ENCODE measurements at regions of chr5 and their contacts with region 1.

Region 1: GRCh38 chr5:174418928-174419796 is 305.2 kb upstream of the MSX2 start:
- DNase-seq: peak; percentile 86
- H3K27ac ChIP-seq: no peak overlapping the region
- CTCF ChIP-seq: peak; percentile 97

Region 2: GRCh38 chr5:173890195-173890991 is 528.8 kb before region 1 on chr5:
- CTCF ChIA-PET with region 1: no interaction called
- POLR2A ChIA-PET with region 1: no interaction called
- DNase-seq: no peak
- H3K27ac ChIP-seq: peak overlapping the region; percentile 20
- CTCF ChIP-seq: no peak

Region 3: DNA sequence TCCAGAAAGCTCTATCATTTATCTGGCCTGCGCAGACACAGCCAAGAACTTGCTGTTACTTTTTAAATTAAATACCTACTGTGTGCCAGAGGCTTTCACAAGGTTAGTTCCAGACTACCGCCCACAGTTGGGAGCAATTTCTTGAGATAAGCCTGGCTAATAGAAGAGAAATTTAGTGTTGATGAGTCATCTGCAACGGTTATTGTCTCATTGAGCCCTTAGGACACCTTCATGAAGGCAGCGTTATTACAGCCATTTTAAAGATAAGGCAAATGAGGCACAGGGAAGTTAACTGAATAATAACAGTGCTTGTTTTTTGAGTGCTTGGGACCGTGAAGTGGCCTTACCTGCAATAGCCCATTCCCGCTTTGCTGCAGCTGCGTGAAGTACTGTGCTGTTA is 12.3 kb after region 1 on chr5:
- CTCF ChIA-PET with region 1: interaction called, 11 read pairs
- POLR2A ChIA-PET with region 1: no interaction called
- DNase-seq: peak; percentile 45
- H3K27ac ChIP-seq: no peak overlapping the region
- CTCF ChIP-seq: no peak

Region 4: GRCh38 chr5:174735498-174736330 is 316.6 kb after region 1 on chr5:
- CTCF ChIA-PET with region 1: interaction called, 13 read pairs
- POLR2A ChIA-PET with region 1: no interaction called
- DNase-seq: peak; percentile 70
- H3K27ac ChIP-seq: no peak overlapping the region
- CTCF ChIP-seq: peak; percentile 29

Region 5: GRCh38 chr5:174793684-174794328 is 374.6 kb after region 1 on chr5:
- CTCF ChIA-PET with region 1: interaction called, 52 read pairs
- POLR2A ChIA-PET with region 1: interaction called, 3 read pairs
- DNase-seq: peak; percentile 68
- H3K27ac ChIP-seq: no peak overlapping the region
- CTCF ChIP-seq: peak; percentile 95

Measured in RWPE1 (cell line).